ENCODE measurements at regions of chr1 and their contacts with region 1.

Region 1: DNA sequence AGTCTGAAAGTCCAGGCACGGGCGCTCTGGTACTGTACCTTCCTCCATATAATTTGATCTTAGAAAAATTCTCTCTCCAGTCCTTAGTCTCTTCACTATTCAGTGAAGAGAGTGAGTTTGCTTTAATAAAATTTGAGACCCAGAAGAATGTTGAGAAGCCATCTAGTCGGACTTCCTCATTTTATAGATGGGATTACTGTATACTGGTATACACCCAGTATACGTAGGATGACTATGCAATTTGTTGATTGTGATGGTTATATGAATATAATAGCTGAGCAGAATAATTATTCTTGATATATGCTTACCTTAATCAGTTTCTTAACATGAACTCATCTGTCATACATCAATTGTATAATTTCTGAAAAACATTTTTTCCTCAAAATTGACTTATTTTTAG is 328.0 kb upstream of the B3GALT2 start:
- DNase-seq: no peak
- ATAC-seq: no peak
- H3K4me3 ChIP-seq: no peak overlapping the region
- H3K4me3 Mint-ChIP-seq: no peak overlapping the region
- H3K27ac ChIP-seq: no peak overlapping the region
- H3K27ac Mint-ChIP-seq: no peak overlapping the region
- H3K4me1 ChIP-seq: no peaks in the 10 kb centered on the region
- H3K4me1 Mint-ChIP-seq: no peaks in the 10 kb centered on the region
- H3K27me3 ChIP-seq: no peaks in the 10 kb centered on the region
- H3K27me3 Mint-ChIP-seq: no peaks in the 10 kb centered on the region
- CTCF ChIP-seq: no peak

Region 2: GRCh38 chr1:193417945-193418744 is 96.3 kb before region 1 on chr1:
- CTCF ChIA-PET with region 1: no interaction called
- POLR2A ChIA-PET with region 1: no interaction called
- intact Hi-C with region 1: no loop called
- DNase-seq: peak in 2 of 9 experiments; percentile 49 to 67
- ATAC-seq: peak; percentile 78
- H3K4me3 ChIP-seq: peak overlapping the region; percentile 42 to 49
- H3K4me3 Mint-ChIP-seq: peak overlapping the region; percentile 80
- H3K27ac ChIP-seq: peak overlapping the region; percentile 34 to 46
- H3K27ac Mint-ChIP-seq: peak overlapping the region; percentile 87
- H3K4me1 ChIP-seq: peaks cover 14% of the 10 kb centered on the region
- H3K4me1 Mint-ChIP-seq: peaks cover 39% of the 10 kb centered on the region
- H3K27me3 ChIP-seq: no peaks in the 10 kb centered on the region
- H3K27me3 Mint-ChIP-seq: no peaks in the 10 kb centered on the region
- CTCF ChIP-seq: no peak

Region 3: DNA sequence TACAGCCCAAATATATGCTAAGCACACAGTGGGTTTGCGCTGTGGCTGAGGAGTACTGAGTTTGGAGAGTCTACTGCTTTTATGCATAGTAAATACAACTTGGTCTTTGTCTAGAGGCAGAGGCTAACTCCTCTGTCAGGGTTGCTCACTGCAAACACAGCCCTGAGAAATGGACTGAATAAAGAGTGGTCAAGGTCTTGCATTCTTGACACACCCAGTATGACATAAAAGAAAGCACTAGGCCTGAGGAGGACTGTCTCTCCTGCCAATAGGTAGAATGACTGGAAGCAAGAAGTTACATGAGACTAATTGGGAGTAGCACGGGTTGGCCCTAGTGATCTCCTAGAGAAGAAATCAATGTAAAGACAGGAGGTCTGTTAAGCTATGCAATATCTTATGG is 39.2 kb after region 1 on chr1:
- CTCF ChIA-PET with region 1: no interaction called
- POLR2A ChIA-PET with region 1: no interaction called
- intact Hi-C with region 1: loop called in 1 of 2 experiments (anchors 2 kb)
- DNase-seq: no peak
- ATAC-seq: no peak
- H3K4me3 ChIP-seq: no peak overlapping the region
- H3K4me3 Mint-ChIP-seq: no peak overlapping the region
- H3K27ac ChIP-seq: no peak overlapping the region
- H3K27ac Mint-ChIP-seq: no peak overlapping the region
- H3K4me1 ChIP-seq: no peaks in the 10 kb centered on the region
- H3K4me1 Mint-ChIP-seq: peaks cover 10% of the 10 kb centered on the region
- H3K27me3 ChIP-seq: no peaks in the 10 kb centered on the region
- H3K27me3 Mint-ChIP-seq: no peaks in the 10 kb centered on the region
- CTCF ChIP-seq: no peak

Region 4: DNA sequence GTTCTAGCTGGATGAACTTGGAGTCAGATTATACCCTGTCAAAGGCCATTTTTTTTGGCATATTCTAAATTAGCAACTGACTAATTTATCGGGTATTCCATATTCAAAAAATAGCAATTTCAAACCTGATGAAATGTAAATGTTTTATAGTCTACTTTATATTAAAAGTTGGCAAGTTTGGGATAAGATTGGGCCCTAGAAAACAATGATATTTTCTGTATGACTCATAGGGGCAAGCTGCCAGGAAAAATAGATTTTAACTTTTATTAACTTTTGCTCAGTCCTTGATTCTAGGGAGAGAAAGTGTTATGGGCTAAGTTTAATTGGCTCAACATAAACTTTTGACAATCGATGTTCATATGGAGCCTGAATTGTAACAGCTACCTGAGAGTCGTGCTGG is 248.9 kb after region 1 on chr1:
- CTCF ChIA-PET with region 1: no interaction called
- POLR2A ChIA-PET with region 1: no interaction called
- intact Hi-C with region 1: no loop called
- DNase-seq: no peak
- ATAC-seq: no peak
- H3K4me3 ChIP-seq: no peak overlapping the region
- H3K4me3 Mint-ChIP-seq: no peak overlapping the region
- H3K27ac ChIP-seq: no peak overlapping the region
- H3K27ac Mint-ChIP-seq: no peak overlapping the region
- H3K4me1 ChIP-seq: no peaks in the 10 kb centered on the region
- H3K4me1 Mint-ChIP-seq: no peaks in the 10 kb centered on the region
- H3K27me3 ChIP-seq: no peaks in the 10 kb centered on the region
- H3K27me3 Mint-ChIP-seq: no peaks in the 10 kb centered on the region
- CTCF ChIP-seq: no peak